GM12878 (cell line): ENCODE measurements at regions of chr2 and their contacts with region 1.

Region 1: GRCh38 chr2:34096562-34097171 is 497.6 kb upstream of the FAM98A start:
- DNase-seq: peak; percentile 24
- ATAC-seq: peak; percentile 88
- H3K4me3 ChIP-seq: no peak overlapping the region
- H3K27ac ChIP-seq: no peak overlapping the region
- H3K4me1 ChIP-seq: no peaks in the 10 kb centered on the region
- H3K27me3 ChIP-seq: no peaks in the 10 kb centered on the region
- CTCF ChIP-seq: peak; percentile 55 to 78 (median 76); a peak in 5 of 6 replicates
- EP300 ChIP-seq: no peak
- POLR2A ChIP-seq: no peak
- RAD21 ChIP-seq: peak; percentile 76

Region 2: DNA sequence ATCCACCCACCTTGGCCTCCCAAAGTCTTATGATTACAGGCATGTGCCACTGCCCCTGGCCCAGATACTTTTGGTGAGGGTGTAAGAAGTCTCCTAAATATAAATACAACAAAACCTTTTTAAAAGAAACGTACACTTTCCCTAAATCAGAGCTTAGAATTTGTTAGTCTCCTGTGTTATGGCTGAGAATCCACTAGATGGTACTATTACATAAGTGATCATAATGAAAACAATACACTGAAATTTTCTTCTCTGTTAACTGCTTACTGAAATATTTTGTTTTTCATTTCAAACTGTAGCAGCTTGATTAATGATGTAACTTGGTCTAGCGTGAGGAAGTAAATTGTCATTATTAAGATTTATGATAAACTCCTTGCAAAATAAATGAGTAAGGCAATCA is 422.7 kb before region 1 on chr2:
- CTCF ChIA-PET with region 1: interaction called, 4 read pairs
- POLR2A ChIA-PET with region 1: no interaction called
- RAD21 ChIA-PET with region 1: no interaction called
- SMC1A ChIA-PET with region 1: interaction called, 3 read pairs
- in situ Hi-C with region 1: no loop called
- intact Hi-C with region 1: loop called (anchors 10 kb)
- DNase-seq: no peak
- ATAC-seq: peak; percentile 51
- H3K4me3 ChIP-seq: no peak overlapping the region
- H3K27ac ChIP-seq: no peak overlapping the region
- H3K4me1 ChIP-seq: no peaks in the 10 kb centered on the region
- H3K27me3 ChIP-seq: no peaks in the 10 kb centered on the region; a peak in 1 of 4 replicates
- CTCF ChIP-seq: peak in 2 of 3 experiments; percentile 18 to 44; a peak in 4 of 6 replicates
- EP300 ChIP-seq: no peak
- POLR2A ChIP-seq: no peak
- RAD21 ChIP-seq: peak; percentile 57; the same call in 1 of the 2 replicates

Region 3: GRCh38 chr2:33984131-33984530 is 112.5 kb before region 1 on chr2:
- CTCF ChIA-PET with region 1: no interaction called
- POLR2A ChIA-PET with region 1: no interaction called
- RAD21 ChIA-PET with region 1: no interaction called
- SMC1A ChIA-PET with region 1: no interaction called
- in situ Hi-C with region 1: no loop called
- intact Hi-C with region 1: no loop called
- DNase-seq: no peak
- ATAC-seq: no peak
- H3K4me3 ChIP-seq: no peak overlapping the region
- H3K27ac ChIP-seq: no peak overlapping the region
- H3K4me1 ChIP-seq: no peaks in the 10 kb centered on the region
- H3K27me3 ChIP-seq: no peaks in the 10 kb centered on the region
- CTCF ChIP-seq: no peak
- EP300 ChIP-seq: no peak
- POLR2A ChIP-seq: no peak
- RAD21 ChIP-seq: no peak

Region 4: DNA sequence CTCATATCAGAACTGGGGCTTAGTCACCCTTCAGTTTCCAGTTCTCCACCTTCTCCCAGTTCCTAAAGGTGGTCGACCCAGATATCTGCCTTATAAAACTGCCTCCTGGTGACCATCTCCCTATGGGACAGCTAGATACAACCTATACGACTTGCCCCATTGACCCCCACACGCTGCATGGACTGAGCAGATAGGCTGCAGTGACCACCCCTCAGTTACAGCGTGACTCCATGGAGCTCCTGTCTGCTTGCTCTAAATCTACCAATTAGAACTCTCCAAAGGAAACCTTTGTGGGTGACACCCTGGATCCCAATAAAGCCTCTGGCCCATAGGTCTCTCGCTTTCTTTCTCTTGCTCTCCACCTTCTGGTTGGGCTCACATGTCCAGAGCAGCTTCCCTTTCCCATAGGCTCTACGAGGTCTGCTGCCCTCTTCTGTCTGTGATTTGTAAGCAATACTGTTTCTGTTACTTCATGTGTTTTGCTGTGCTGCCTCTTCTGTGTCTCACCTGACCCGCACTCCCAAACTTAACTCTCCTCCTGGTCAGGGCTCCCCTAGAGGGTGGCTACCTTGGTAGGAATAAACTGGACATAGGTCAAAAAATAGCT is 473.7 kb after region 1 on chr2:
- CTCF ChIA-PET with region 1: interaction called, 18 read pairs
- POLR2A ChIA-PET with region 1: no interaction called
- RAD21 ChIA-PET with region 1: interaction called, 5 read pairs
- SMC1A ChIA-PET with region 1: interaction called, 9 read pairs
- in situ Hi-C with region 1: no loop called
- intact Hi-C with region 1: loop called (anchors 2 kb)
- DNase-seq: no peak
- ATAC-seq: peak; percentile 96
- H3K4me3 ChIP-seq: no peak overlapping the region
- H3K27ac ChIP-seq: no peak overlapping the region
- H3K4me1 ChIP-seq: no peaks in the 10 kb centered on the region
- H3K27me3 ChIP-seq: no peaks in the 10 kb centered on the region
- CTCF ChIP-seq: peak in 2 of 3 experiments; percentile 45 to 61; a peak in 3 of 6 replicates
- EP300 ChIP-seq: no peak
- POLR2A ChIP-seq: no peak
- RAD21 ChIP-seq: peak; percentile 35

Region 5: GRCh38 chr2:34738691-34739090 is 642.0 kb after region 1 on chr2:
- CTCF ChIA-PET with region 1: interaction called, 15 read pairs
- POLR2A ChIA-PET with region 1: no interaction called
- RAD21 ChIA-PET with region 1: interaction called, 14 read pairs
- SMC1A ChIA-PET with region 1: interaction called, 28 read pairs
- in situ Hi-C with region 1: no loop called
- intact Hi-C with region 1: loop called (anchors 2 kb)
- DNase-seq: no peak
- ATAC-seq: peak; percentile 63
- H3K4me3 ChIP-seq: no peak overlapping the region
- H3K27ac ChIP-seq: no peak overlapping the region
- H3K4me1 ChIP-seq: no peaks in the 10 kb centered on the region
- H3K27me3 ChIP-seq: no peaks in the 10 kb centered on the region
- CTCF ChIP-seq: peak; percentile 31 to 66 (median 46); a peak in 4 of 6 replicates
- EP300 ChIP-seq: no peak
- POLR2A ChIP-seq: no peak
- RAD21 ChIP-seq: peak; percentile 29; the same call in 1 of the 2 replicates

Region 6: DNA sequence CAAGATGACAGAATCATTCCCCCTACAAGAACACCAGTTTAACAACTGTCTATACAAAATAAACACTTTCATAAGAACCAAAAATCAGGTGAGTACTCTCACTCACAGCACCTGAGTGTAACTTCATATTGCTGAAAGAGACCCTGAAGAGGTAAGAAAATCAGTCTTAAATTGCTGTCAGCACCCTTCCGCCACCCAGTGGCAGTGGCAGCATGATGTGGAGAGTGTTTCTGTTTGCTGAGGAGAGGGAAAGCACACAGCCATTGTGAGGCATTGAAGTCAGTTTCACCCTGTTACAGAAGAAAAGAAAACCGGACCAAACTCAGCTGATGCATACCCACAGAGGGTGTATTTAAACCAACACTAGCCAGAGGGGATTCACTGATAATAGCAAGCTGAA is 1018.1 kb after region 1 on chr2:
- CTCF ChIA-PET with region 1: interaction called, 5 read pairs
- POLR2A ChIA-PET with region 1: no interaction called
- RAD21 ChIA-PET with region 1: no interaction called
- SMC1A ChIA-PET with region 1: interaction called, 3 read pairs
- in situ Hi-C with region 1: no loop called
- intact Hi-C with region 1: loop called (anchors 5 kb)
- DNase-seq: no peak
- ATAC-seq: peak; percentile 85
- H3K4me3 ChIP-seq: no peak overlapping the region
- H3K27ac ChIP-seq: no peak overlapping the region
- H3K4me1 ChIP-seq: no peaks in the 10 kb centered on the region
- H3K27me3 ChIP-seq: no peaks in the 10 kb centered on the region
- CTCF ChIP-seq: peak in 2 of 3 experiments; percentile 28 to 47; a peak in 3 of 6 replicates
- EP300 ChIP-seq: no peak
- POLR2A ChIP-seq: no peak
- RAD21 ChIP-seq: no peak

Region 7: GRCh38 chr2:35343135-35343534 is 1246.5 kb after region 1 on chr2:
- CTCF ChIA-PET with region 1: no interaction called
- POLR2A ChIA-PET with region 1: no interaction called
- RAD21 ChIA-PET with region 1: no interaction called
- SMC1A ChIA-PET with region 1: no interaction called
- in situ Hi-C with region 1: no loop called
- intact Hi-C with region 1: loop called (anchors 2 kb)
- DNase-seq: no peak
- ATAC-seq: peak; percentile 61; the same call in 2 of the 3 replicates
- H3K4me3 ChIP-seq: no peak overlapping the region
- H3K27ac ChIP-seq: no peak overlapping the region
- H3K4me1 ChIP-seq: no peaks in the 10 kb centered on the region
- H3K27me3 ChIP-seq: no peaks in the 10 kb centered on the region
- CTCF ChIP-seq: peak; percentile 44 to 57 (median 46)
- EP300 ChIP-seq: no peak
- POLR2A ChIP-seq: no peak
- RAD21 ChIP-seq: peak; percentile 37